ENCODE measurements at regions of chr9 and their contacts with region 1.

Region 1: GRCh38 chr9:106962615-106963363 is 99.8 kb downstream of the ZNF462 start:
- DNase-seq: peak; percentile 36 to 67 (median 46)
- H3K4me3 ChIP-seq: no peak overlapping the region
- H3K27ac ChIP-seq: peak overlapping the region in 4 of 5 donors; percentile 24 to 63 (median 50)
- H3K4me1 ChIP-seq: peaks cover 6 to 11% of the 10 kb centered on the region in 2 donors
- H3K27me3 ChIP-seq: no peaks in the 10 kb centered on the region
- CTCF ChIP-seq: no peak
- POLR2A ChIP-seq: no peak

Region 2: DNA sequence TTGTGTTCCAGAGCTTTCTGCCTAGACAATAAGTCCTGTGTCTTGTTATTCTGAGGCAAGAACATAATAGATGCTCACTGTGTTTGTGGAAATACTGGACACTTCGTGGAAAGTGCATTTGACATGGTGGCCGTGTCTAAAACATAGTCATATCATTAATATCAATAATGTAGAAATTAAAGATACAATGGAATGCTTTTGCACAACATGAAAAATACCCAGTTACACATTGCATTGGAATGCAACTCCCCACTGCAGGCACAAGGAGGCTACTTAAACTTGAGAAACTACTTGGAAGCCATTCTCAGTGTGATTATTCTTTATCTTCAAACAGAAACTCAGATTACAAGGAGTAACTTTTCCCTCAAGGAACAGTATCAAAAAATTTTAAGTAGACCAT is 245.1 kb before region 1 on chr9:
- intact Hi-C with region 1: no loop called
- DNase-seq: peak in 6 of 7 donors; percentile 15 to 60 (median 29)
- H3K4me3 ChIP-seq: no peak overlapping the region
- H3K27ac ChIP-seq: no peak overlapping the region
- H3K4me1 ChIP-seq: peaks cover 0 to 8% of the 10 kb centered on the region in 2 donors
- H3K27me3 ChIP-seq: no peaks in the 10 kb centered on the region
- CTCF ChIP-seq: peak in 4 of 6 experiments; percentile 17 to 31 (median 23)
- POLR2A ChIP-seq: no peak

Region 3: DNA sequence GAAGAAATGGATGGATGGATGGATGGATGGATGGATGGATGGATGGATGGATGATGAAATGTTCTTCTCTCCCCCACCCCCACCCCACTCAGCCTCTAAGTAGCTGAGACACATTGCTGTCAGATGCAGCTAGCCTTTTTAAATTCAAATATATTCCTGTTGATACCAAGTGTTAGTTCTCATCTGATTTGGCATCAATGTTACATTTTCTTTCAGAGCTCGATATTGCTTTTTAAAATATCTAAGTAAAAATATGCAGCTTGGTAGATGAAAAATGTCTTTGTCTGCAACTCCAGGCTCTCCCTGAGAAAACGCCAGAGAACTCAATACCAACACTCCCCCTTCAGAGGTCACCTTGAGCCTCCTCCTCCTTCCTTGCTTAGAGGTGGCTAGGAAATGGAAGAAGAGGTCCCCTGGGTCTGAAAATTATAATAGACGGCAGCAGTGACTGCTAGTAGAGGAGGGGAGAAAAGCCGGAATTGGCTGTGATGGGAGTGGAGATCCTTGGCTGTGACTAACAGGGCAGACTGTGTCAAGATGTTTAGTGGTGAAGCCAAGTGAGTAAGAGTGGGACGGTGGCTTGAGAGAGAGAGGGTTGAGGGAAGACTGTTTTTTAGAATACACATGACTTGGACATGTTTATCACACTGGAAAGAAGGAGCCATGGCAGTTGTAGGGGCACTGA is 56.2 kb after region 1 on chr9:
- intact Hi-C with region 1: loop called in 1 of 2 experiments (anchors 5 kb)
- DNase-seq: no peak
- H3K4me3 ChIP-seq: no peak overlapping the region
- H3K27ac ChIP-seq: no peak overlapping the region
- H3K4me1 ChIP-seq: no peaks in the 10 kb centered on the region
- H3K27me3 ChIP-seq: no peaks in the 10 kb centered on the region
- CTCF ChIP-seq: no peak
- POLR2A ChIP-seq: no peak

Measured in adrenal gland (tissue), 19 donors.